ENCODE measurements at regions of chr3 and their contacts with region 1.

Region 1: GRCh38 chr3:37210230-37210629 is 35.8 kb upstream of the LRRFIP2 start:
- DNase-seq: no peak
- ATAC-seq: no peak
- H3K4me3 ChIP-seq: no peak overlapping the region
- H3K4me3 Mint-ChIP-seq: no peak overlapping the region
- H3K27ac ChIP-seq: no peak overlapping the region
- H3K27ac Mint-ChIP-seq: no peak overlapping the region
- H3K4me1 ChIP-seq: no peaks in the 10 kb centered on the region
- H3K4me1 Mint-ChIP-seq: peaks cover 0 to 10% (median 2%) of the 10 kb centered on the region in 3 donors
- H3K27me3 ChIP-seq: no peaks in the 10 kb centered on the region
- H3K27me3 Mint-ChIP-seq: no peaks in the 10 kb centered on the region

Region 2: GRCh38 chr3:35724106-35724505 is 1486.1 kb before region 1 on chr3:
- CTCF ChIA-PET with region 1: no interaction called
- POLR2A ChIA-PET with region 1: no interaction called
- DNase-seq: no peak
- ATAC-seq: no peak
- H3K4me3 ChIP-seq: no peak overlapping the region
- H3K4me3 Mint-ChIP-seq: no peak overlapping the region
- H3K27ac ChIP-seq: no peak overlapping the region
- H3K27ac Mint-ChIP-seq: no peak overlapping the region
- H3K4me1 ChIP-seq: no peaks in the 10 kb centered on the region
- H3K4me1 Mint-ChIP-seq: no peaks in the 10 kb centered on the region
- H3K27me3 ChIP-seq: no peaks in the 10 kb centered on the region
- H3K27me3 Mint-ChIP-seq: no peaks in the 10 kb centered on the region

Region 3: DNA sequence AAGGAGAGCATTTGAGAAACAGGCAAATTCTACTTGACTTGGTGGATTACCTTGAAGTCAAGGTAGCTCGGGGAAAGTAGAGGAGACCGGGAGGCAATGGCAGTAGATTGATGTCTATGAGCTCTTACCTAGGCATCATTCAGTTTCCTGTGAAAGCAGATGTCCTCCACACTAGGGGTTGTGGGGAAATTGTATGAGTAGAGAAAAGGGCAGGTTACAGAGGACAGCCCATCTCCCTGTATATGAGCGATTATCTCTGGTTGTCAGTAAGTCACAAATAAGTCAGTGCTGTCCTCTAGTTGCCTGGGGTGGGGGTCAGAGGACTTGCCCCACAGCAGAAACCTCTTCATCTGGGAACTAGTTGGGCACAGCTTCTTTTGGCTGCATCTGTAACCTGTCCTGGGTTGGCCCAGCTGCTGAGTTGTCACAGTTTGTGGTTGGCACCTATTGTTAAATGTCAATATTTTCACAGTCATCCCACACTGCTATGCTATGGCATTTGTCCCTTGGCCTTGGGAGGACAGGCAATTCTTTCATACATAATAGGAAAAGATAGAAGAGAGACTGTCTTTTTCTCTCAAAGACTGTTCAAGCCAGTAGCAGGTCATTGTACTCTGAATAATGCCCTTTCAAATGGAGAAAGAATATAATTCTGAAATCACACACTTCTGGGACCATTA is 17.8 kb after region 1 on chr3:
- CTCF ChIA-PET with region 1: interaction called, 4 to 12 read pairs
- POLR2A ChIA-PET with region 1: no interaction called
- DNase-seq: peak in 2 of 35 experiments; percentile 2 to 17
- ATAC-seq: no peak
- H3K4me3 ChIP-seq: no peak overlapping the region
- H3K4me3 Mint-ChIP-seq: no peak overlapping the region
- H3K27ac ChIP-seq: peak overlapping the region; percentile 31
- H3K27ac Mint-ChIP-seq: no peak overlapping the region
- H3K4me1 ChIP-seq: peaks cover 11 to 24% of the 10 kb centered on the region in 2 experiments
- H3K4me1 Mint-ChIP-seq: peaks cover 10 to 32% (median 24%) of the 10 kb centered on the region in 3 donors
- H3K27me3 ChIP-seq: no peaks in the 10 kb centered on the region
- H3K27me3 Mint-ChIP-seq: no peaks in the 10 kb centered on the region